ENCODE measurements at regions of chr2 and their contacts with region 1.

Region 1: DNA sequence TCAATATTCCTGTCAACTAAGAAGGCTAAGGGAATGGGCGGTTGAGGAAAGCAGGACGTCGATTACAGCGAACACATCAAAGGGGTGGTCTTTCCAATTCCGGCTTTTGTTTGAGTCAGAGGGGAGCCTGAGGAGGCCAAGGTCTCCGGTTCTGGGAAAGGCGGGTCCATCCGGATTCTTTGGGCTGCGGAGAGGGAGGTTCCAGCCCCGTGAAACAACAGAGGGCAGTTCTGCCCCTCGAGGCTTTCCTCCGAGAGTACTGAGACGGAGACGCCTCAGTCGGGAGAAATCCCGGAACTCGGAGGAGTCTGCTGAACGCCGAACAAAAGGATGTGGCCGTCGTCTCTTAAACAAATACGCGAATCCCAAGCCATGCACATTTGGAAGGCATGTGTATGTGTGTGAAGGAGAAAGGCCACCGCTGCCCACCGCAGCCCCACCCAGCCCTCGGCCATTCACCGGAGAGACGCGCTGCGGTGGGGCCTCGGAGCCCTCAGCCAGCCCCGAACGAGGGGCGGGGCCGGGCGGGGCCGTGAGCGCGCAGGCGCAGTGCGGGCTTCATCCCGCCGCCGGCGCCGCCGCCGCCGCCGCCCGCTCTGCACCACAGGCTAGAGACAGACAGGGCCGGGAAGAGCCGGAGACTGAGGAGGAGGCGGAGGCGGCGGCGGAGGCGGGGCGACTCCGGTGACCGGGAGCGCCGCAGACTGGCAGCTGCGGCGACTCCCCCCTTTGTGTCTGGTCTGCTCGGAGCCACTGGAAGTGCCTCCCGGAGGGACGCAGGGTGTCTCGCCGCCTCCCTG is at the start of gene BMPR2:
- DNase-seq: peak; percentile 94
- total RNA-seq, gene BMPR2: 83.6 TPM

Region 2: GRCh38 chr2:202278944-202279343 is 96.9 kb before region 1 on chr2:
- intact Hi-C with region 1: loop called (anchors 5 kb)
- DNase-seq: no peak

Region 3: DNA sequence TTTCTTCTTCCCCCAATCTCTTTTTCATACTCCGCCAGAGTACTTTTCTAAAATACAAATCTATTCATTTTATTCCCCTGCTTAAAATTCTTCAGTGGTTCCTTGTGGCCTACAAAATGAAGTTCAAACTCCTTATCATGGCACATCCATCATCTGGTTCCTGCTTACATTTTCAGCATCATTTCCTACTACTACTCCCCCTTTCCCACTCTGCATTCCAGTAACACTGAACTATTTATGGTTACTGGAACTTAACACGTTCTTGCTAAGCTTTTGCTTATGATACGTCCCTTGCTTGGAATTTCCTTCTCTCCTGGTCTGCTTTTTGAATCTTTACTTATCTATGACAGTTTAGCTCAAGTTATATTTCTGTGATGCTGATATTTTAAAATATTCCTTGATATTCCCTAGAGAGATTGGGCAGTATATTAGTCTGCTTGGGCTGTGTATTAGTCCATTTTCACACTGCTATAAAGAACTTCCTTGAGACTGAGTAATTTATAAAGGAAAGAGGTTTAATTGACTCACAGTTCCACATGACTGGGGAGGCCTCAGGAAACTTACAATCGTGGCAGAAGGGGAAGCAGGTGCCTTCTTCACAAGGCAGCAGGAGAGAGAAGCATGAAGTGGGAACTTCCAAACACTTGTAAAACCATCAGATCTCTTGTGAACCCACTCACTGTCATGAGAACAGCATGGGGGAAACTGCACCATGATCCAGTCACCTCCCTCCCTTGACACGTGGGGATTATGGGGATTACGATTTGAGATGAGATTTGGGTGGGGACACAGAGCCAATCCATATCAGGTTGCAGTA is 53.6 kb after region 1 on chr2:
- intact Hi-C with region 1: loop called (anchors 5 kb)
- DNase-seq: no peak

Region 4: DNA sequence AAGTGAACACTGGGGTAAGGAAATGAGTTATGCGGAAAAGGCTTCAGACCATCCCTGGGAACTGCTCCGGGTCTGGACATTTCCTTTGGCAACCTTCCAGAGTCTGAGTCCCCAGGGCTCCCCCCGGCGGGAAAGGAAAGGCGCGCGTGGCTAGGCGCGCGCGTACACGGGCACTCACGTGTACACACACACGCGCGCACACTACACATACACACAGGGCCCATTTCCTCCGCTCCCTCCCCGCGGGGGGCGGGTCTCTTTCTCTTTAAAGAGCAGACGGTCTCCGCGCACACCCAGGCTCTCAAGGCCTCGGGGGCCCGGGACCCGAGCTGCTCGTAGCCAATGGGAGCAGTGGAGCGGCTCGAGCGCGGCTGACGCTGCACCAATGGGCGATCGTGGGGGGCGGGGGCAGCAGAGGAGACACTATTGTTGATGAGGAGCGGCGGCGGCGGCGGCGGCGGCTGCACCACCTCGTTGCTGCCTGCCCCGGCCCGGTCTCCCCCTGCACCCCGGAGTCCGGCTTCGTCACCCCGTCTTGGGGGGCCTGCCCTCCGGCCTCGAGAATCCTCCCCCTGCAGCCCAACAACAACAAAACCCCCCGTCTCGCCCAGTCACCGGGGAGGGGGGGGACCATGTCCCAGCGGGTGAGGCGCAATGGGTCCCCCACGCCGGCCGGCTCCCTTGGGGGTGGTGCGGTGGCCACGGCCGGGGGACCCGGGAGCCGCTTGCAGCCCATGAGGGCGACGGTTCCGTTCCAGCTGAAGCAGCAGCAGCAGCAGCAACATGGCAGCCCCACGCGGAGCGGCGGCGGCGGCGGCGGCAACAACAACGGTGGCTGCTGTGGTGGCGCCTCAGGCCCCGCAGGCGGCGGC is 259.0 kb after region 1 on chr2 and contains the start of gene FAM117B:
- intact Hi-C with region 1: loop called (anchors 5 kb)
- DNase-seq: peak; percentile 98
- total RNA-seq, gene FAM117B: 1.2 TPM